Common myeloid progenitor, CD34-positive (primary cell): ENCODE measurements at regions of chr9 and their contacts with region 1.

Region 1: GRCh38 chr9:21812946-21813568 is 10.6 kb downstream of the MTAP start:
- DNase-seq: peak; percentile 40 to 62 (median 55)
- H3K4me3 ChIP-seq: no peak overlapping the region
- H3K27ac ChIP-seq: no peak overlapping the region
- H3K4me1 ChIP-seq: peaks cover 2 to 7% (median 3%) of the 10 kb centered on the region in 4 experiments
- H3K27me3 ChIP-seq: no peaks in the 10 kb centered on the region

Region 2: GRCh38 chr9:21096172-21096900 is 716.7 kb before region 1 on chr9:
- CTCF ChIA-PET with region 1: no interaction called
- POLR2A ChIA-PET with region 1: no interaction called
- DNase-seq: peak; percentile 91 to 98 (median 97)
- H3K4me3 ChIP-seq: peak overlapping the region in 6 of 7 experiments; percentile 24 to 62 (median 38)
- H3K27ac ChIP-seq: peak overlapping the region; percentile 52 to 81
- H3K4me1 ChIP-seq: peaks cover 9 to 27% (median 23%) of the 10 kb centered on the region in 4 experiments
- H3K27me3 ChIP-seq: no peaks in the 10 kb centered on the region

Region 3: GRCh38 chr9:21502586-21502985 is 310.5 kb before region 1 on chr9:
- CTCF ChIA-PET with region 1: no interaction called
- POLR2A ChIA-PET with region 1: no interaction called
- DNase-seq: no peak
- H3K4me3 ChIP-seq: no peak overlapping the region
- H3K27ac ChIP-seq: no peak overlapping the region
- H3K4me1 ChIP-seq: peaks cover 0 to 9% (median 2%) of the 10 kb centered on the region in 4 experiments
- H3K27me3 ChIP-seq: peaks cover 0 to 2% (median 0%) of the 10 kb centered on the region in 5 experiments

Region 4: DNA sequence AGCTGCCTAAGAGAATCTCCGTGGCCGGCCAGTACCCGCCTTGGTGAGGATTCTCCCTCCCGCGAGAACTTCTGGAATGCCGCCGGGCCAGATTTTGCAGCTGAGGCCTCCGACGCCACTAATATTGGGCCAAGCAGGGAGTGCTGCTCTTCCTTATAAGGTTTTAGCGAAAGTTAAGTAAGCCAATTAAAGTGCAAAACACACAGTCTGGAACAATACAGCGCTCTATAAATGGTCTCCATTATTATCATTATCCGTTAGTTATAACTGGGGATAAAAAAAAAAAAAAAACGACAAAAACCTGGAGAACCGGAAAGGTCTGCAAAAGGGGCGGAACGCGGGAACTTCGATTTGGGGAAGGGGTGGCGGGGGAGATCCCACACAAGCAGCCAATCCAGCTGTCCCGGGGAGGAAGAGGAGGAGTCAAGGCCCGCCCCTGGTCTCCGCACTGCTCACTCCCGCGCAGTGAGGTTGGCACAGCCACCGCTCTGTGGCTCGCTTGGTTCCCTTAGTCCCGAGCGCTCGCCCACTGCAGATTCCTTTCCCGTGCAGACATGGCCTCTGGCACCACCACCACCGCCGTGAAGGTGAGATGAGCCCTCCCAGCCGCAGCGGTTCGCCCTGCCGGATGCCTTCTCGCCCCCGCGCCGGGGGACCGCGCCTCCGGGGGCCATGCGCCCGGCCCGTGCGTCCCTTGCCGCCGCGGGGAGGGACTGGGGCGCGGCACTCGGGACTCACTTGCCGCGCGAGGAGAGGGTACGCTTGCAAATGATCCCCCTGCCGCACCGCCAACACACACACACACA is 10.7 kb before region 1 on chr9 and contains the start of gene MTAP:
- CTCF ChIA-PET with region 1: interaction called, 29 read pairs
- POLR2A ChIA-PET with region 1: no interaction called
- DNase-seq: peak; percentile 68 to 85 (median 75)
- H3K4me3 ChIP-seq: peak within 1 kb of the TSS; percentile 64 to 91 (median 83)
- H3K27ac ChIP-seq: peak within 1 kb of the TSS; percentile 1 to 55
- H3K4me1 ChIP-seq: peaks cover 10 to 25% (median 20%) of the 10 kb centered on the region in 4 experiments
- H3K27me3 ChIP-seq: peaks cover 0 to 5% (median 0%) of the 10 kb centered on the region in 5 experiments

Region 5: DNA sequence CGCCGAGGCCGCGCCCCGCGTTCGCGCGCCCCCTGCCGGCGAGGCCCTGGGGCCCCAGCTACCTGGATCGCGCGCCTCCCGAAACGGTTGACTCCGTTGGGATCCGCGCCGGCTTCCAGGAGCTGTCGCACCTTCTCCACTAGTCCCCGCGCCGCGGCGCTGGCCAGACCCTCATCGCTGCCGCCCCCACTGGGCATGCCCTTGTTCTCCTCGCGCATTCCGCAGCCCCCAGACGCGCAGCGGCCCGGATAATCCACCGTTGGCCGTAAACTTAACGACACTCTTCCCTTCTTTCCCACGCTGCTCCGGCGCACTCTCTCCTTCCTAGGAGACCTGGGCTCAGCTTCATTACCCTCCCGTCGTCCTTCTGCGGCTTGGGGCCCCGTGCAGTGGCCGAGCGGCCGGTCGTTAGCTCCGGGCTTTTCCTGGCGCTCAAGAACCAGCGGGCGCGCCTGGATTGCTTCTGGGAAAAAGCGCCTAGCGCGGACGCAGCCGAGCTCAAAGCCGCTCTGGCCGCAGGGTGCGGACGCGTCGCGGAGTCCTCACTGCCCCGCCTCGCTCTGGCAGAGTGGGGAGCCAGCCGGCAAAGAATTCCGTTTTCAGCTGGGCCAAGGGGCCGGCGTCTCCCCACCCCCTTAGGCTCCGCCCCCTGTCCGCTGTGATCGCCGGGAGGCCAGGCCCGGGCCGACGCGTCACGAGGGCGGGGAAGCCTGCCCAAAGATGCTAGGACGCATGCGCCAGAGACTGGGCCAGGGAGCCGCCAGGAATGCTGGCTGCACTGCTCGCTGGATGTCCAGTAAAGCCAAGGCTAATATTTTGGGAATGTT is 195.9 kb after region 1 on chr9 and contains the start of gene CDKN2B:
- CTCF ChIA-PET with region 1: interaction called, 26 read pairs
- POLR2A ChIA-PET with region 1: no interaction called
- DNase-seq: no peak
- H3K4me3 ChIP-seq: peak within 1 kb of the TSS in 6 of 7 experiments; percentile 19 to 68 (median 50)
- H3K27ac ChIP-seq: no peak within 1 kb of the TSS
- H3K4me1 ChIP-seq: peaks cover 0 to 21% (median 14%) of the 10 kb centered on the region in 4 experiments
- H3K27me3 ChIP-seq: peaks cover 28 to 95% (median 53%) of the 10 kb centered on the region in 5 experiments

Region 6: DNA sequence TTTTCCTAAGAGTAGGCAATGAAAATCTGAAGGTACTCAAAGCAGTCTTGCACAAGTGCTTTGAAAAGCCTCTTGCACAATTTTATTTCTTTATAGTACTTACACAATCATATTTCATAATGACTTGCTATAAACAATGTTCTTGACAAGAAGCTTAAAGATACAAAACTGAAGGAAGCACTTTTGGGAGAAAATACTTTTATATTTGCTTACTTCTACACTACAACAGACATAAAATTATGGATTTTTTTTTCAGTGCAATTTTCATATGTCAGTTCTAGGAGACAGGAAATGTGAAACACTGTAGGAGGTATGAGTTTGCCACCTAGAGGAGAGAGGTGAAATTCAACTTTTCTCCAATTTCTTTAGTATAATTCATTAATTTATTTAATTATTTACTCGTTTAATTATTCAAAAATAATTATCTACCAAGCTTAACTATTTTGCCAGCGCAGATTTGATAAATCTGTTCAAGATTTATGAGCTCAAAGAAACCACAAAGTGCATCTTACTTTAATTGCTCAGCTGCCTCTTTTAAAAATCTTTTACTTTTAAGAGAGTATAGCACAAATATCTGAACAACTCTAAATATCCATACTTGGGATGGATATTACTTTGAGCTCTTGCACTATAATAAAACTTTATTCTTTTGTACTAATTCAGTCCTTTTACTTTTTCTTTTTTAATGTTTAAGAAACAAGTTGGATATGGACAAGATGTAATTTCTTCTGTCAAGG is 225.1 kb after region 1 on chr9:
- CTCF ChIA-PET with region 1: interaction called, 34 read pairs
- POLR2A ChIA-PET with region 1: no interaction called
- DNase-seq: peak; percentile 14 to 32 (median 31)
- H3K4me3 ChIP-seq: no peak overlapping the region
- H3K27ac ChIP-seq: no peak overlapping the region
- H3K4me1 ChIP-seq: no peaks in the 10 kb centered on the region
- H3K27me3 ChIP-seq: peaks cover 11 to 80% (median 46%) of the 10 kb centered on the region in 5 experiments

Region 7: DNA sequence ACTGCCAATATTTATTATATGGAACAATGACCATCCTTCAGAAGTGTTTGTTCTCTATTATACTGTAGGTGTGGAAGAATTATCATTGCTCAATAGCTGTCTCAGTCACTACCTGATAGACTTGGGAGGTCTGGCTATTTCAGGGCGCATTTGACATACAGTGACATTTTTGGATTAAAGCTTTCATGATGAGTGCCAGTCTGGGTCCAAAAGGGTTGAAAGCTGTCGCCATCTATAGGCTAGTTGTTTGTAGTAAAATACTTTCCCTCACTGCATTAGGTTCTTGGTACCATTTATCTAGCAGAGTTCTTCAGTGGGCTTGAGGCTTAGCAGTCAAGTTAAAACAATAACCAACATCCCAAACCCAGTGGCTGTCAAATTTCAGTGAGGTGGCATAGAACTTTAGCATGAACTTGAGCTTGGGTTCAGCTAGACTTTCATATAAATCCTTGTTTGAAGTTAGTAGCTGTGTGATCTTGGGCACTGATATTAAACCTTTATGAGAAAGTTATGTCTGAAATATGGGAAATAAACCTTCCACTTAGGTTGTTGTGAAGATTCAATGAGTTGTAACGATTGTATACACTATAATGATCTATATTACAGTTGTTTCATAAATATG is 306.6 kb after region 1 on chr9:
- CTCF ChIA-PET with region 1: interaction called, 14 read pairs
- POLR2A ChIA-PET with region 1: no interaction called
- DNase-seq: peak; percentile 15 to 47 (median 46)
- H3K4me3 ChIP-seq: no peak overlapping the region
- H3K27ac ChIP-seq: no peak overlapping the region
- H3K4me1 ChIP-seq: no peaks in the 10 kb centered on the region
- H3K27me3 ChIP-seq: peaks cover 4 to 64% (median 22%) of the 10 kb centered on the region in 5 experiments

Region 8: GRCh38 chr9:22238809-22239684 is 426.0 kb after region 1 on chr9:
- CTCF ChIA-PET with region 1: interaction called, 11 read pairs
- POLR2A ChIA-PET with region 1: no interaction called
- DNase-seq: peak; percentile 21 to 63 (median 57)
- H3K4me3 ChIP-seq: no peak overlapping the region
- H3K27ac ChIP-seq: no peak overlapping the region
- H3K4me1 ChIP-seq: no peaks in the 10 kb centered on the region
- H3K27me3 ChIP-seq: peaks cover 5 to 39% (median 16%) of the 10 kb centered on the region in 5 experiments

Region 9: GRCh38 chr9:22452415-22453010 is 639.5 kb after region 1 on chr9:
- CTCF ChIA-PET with region 1: interaction called, 12 read pairs
- POLR2A ChIA-PET with region 1: no interaction called
- DNase-seq: peak; percentile 43 to 73 (median 59)
- H3K4me3 ChIP-seq: no peak overlapping the region
- H3K27ac ChIP-seq: no peak overlapping the region
- H3K4me1 ChIP-seq: peaks cover 0 to 6% (median under 1%) of the 10 kb centered on the region in 4 experiments
- H3K27me3 ChIP-seq: peaks cover 0 to 11% (median 7%) of the 10 kb centered on the region in 5 experiments